ENCODE measurements at regions of chr3 and their contacts with region 1.

Region 1: DNA sequence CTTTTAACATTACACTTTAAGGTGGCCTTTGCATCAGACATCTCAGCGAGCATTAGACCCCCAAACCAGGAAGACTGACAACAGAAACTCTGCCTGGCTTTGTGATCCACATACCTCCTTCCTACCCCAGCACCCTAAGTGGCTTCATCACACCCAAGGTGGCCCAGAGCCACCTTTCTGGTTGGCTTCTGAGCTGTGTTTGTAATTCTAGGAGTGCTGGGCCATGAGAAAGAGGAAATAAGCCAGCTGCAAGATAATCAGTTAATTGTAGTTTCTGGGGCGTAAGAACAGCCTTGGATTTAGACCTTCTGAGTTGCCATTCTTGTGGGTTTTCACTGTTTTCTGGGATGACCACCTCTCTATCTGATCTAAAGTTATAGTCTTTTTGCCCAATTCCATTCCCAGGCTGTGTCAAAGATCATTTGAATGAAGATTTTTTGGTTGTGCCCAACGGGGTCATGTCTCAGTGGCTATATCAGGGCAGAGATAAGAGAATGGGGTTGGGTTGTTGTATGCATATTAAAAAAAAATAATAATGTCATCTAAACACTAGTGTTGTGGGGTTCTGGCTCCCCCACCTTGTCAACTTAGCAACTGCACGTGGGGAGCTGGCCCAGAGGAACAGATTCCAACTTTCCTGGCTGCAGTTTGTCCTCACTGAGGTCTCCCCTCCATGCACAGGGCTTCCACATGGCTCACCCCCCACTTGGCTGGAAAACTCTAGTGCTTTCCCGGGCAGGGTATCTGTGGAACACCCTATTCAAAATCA is 234.8 kb upstream of the WNT5A start:
- DNase-seq: no peak
- ATAC-seq: peak in 2 of 4 donors; percentile 30 to 36
- H3K4me3 ChIP-seq: no peak overlapping the region
- H3K27ac ChIP-seq: no peak overlapping the region
- H3K4me1 ChIP-seq: no peaks in the 10 kb centered on the region
- H3K27me3 ChIP-seq: peaks cover 0 to 37% (median 0%) of the 10 kb centered on the region in 9 donors
- CTCF ChIP-seq: peak; percentile 12 to 45 (median 39)
- POLR2A ChIP-seq: no peak

Region 2: GRCh38 chr3:54951405-54951804 is 770.5 kb before region 1 on chr3:
- intact Hi-C with region 1: loop called in 1 of 10 experiments (anchors 10 kb)
- DNase-seq: peak; percentile 70 to 87 (median 84)
- ATAC-seq: peak; percentile 93 to 100 (median 98)
- H3K4me3 ChIP-seq: no peak overlapping the region
- H3K27ac ChIP-seq: no peak overlapping the region
- H3K4me1 ChIP-seq: peaks cover 0 to 16% (median 2%) of the 10 kb centered on the region in 12 donors
- H3K27me3 ChIP-seq: no peaks in the 10 kb centered on the region
- CTCF ChIP-seq: peak; percentile 47 to 71 (median 60)
- POLR2A ChIP-seq: no peak

Region 3: DNA sequence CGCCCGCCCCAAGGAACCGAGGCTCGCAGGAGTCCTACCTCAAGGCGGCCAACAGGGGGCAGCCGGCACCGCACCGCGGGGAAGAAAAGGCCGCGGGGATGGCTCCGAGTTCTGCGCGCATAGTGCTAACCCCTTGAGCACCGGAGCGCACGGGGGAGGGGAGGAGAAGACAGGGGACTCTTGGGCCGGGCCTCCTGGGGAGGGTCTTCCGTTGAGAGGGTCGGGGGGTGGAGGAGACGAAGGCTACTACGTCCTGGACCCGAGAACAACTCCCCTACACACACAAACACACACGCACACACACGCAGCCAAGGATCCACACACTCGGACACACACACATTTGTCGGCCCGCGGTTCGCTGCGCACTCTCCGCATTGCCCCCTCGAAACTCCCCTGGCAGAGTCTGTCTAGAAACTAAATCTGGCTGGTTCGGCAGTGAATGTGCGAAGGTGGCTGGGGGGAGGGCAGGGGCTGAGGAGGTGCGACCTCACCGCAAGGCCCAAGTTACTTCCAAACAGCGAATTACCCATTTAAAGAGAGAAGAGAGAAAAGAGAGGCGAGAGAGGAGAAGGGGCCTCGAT is 236.6 kb before region 1 on chr3:
- intact Hi-C with region 1: loop called in 4 of 10 experiments (anchors 2 to 5 kb)
- DNase-seq: peak; percentile 69 to 87 (median 75)
- ATAC-seq: peak; percentile 64 to 83 (median 83)
- H3K4me3 ChIP-seq: peak overlapping the region; percentile 37 to 92 (median 66)
- H3K27ac ChIP-seq: peak overlapping the region in 10 of 12 donors; percentile 2 to 73 (median 61)
- H3K4me1 ChIP-seq: peaks cover 0 to 71% (median 13%) of the 10 kb centered on the region in 12 donors
- H3K27me3 ChIP-seq: peaks cover 4 to 90% (median 12%) of the 10 kb centered on the region in 9 donors
- CTCF ChIP-seq: peak; percentile 51 to 86 (median 72)
- POLR2A ChIP-seq: no peak

Region 4: DNA sequence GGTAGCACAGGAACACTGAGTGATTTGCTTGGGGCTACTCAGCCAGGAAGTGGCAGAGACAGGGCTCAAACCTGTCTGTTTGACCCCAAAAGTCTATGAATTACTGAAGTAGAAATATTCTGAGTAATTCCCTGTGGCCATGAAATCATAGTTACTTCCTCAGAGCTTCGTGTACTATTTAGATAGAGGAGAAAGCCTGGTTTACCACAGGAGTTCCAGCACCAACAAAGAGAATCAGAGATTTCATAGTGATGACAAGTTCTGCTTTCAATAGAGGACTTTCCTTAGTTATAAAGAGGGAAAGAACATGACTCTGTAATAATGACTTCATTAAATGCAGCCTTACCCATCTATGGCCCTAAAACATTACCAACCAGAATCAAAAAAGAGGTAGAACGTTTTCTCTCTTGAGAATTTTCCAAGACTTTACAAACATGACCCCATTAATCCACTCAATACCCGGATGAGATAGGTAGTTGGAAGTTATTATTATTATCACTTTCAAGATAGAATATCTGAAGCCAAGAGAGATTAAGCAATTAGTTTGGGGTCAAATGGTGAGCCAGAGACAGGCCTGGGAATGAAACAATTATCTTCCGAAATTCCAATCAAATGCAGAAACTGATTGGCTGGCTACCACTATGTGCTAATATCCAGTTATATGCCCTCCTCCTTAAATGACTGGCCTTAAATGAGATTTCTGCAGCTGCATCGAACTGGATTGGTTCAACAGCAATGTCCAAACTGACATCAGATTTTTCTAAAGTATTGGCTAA is 221.2 kb before region 1 on chr3:
- intact Hi-C with region 1: loop called in 2 of 10 experiments (anchors 1 to 10 kb)
- DNase-seq: no peak
- ATAC-seq: no peak
- H3K4me3 ChIP-seq: no peak overlapping the region
- H3K27ac ChIP-seq: no peak overlapping the region
- H3K4me1 ChIP-seq: no peaks in the 10 kb centered on the region
- H3K27me3 ChIP-seq: peaks cover 0 to 5% (median 0%) of the 10 kb centered on the region in 9 donors
- CTCF ChIP-seq: no peak
- POLR2A ChIP-seq: no peak

Region 5: GRCh38 chr3:55505776-55506175 is 216.1 kb before region 1 on chr3:
- intact Hi-C with region 1: loop called in 2 of 10 experiments (anchors 1 to 10 kb)
- DNase-seq: no peak
- ATAC-seq: no peak
- H3K4me3 ChIP-seq: no peak overlapping the region
- H3K27ac ChIP-seq: no peak overlapping the region
- H3K4me1 ChIP-seq: no peaks in the 10 kb centered on the region
- H3K27me3 ChIP-seq: peaks cover 0 to 19% (median 0%) of the 10 kb centered on the region in 9 donors
- CTCF ChIP-seq: no peak
- POLR2A ChIP-seq: no peak

Region 6: DNA sequence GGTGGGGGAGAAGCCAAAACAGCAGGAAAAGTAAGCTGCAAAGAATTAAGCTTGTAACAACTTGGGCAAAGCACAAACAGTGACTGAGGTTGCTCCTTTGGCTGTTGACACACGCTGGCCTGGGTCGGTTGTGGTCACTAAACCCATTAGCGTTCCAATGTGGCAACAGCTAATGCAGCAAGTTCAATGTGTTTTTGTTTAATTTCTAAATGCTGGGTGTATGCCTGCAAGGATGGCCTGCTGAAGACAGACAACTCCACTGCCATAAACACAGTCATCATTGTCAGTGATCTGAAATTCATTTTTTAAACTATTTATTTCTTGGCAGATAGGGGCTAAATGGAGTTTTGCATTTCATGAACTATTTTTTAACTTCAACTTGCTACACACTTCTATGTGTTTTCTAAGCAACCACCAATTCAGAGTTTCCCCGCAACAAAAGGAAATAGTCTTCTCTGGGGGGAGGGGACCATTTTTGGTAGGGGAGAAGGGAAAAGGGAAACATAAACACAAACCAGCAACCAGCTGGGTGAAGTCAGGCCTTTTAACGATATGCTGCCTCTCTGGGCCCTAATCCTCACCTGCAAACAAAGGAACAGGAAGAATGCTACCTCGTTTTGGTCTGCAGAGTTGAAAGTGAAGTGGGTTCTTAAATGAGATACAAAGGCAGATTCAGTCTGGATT is 200.0 kb before region 1 on chr3:
- intact Hi-C with region 1: loop called in 1 of 10 experiments (anchors 10 kb)
- DNase-seq: no peak
- ATAC-seq: no peak
- H3K4me3 ChIP-seq: no peak overlapping the region
- H3K27ac ChIP-seq: no peak overlapping the region
- H3K4me1 ChIP-seq: no peaks in the 10 kb centered on the region
- H3K27me3 ChIP-seq: peaks cover 0 to 8% (median 0%) of the 10 kb centered on the region in 9 donors
- CTCF ChIP-seq: no peak
- POLR2A ChIP-seq: no peak

Region 7: GRCh38 chr3:55571913-55572312 is 150.0 kb before region 1 on chr3:
- intact Hi-C with region 1: loop called in 1 of 10 experiments (anchors 10 kb)
- DNase-seq: peak; percentile 66 to 89 (median 77)
- ATAC-seq: peak; percentile 94 to 98 (median 97)
- H3K4me3 ChIP-seq: no peak overlapping the region
- H3K27ac ChIP-seq: peak overlapping the region in 7 of 12 donors; percentile 22 to 70 (median 56)
- H3K4me1 ChIP-seq: peaks cover 0 to 19% (median 2%) of the 10 kb centered on the region in 12 donors
- H3K27me3 ChIP-seq: no peaks in the 10 kb centered on the region
- CTCF ChIP-seq: peak in 11 of 12 donors; percentile 11 to 61 (median 45)
- POLR2A ChIP-seq: no peak

Region 8: GRCh38 chr3:55654123-55654760 is 67.7 kb before region 1 on chr3:
- intact Hi-C with region 1: no loop called
- DNase-seq: no peak
- ATAC-seq: no peak
- H3K4me3 ChIP-seq: no peak overlapping the region
- H3K27ac ChIP-seq: no peak overlapping the region
- H3K4me1 ChIP-seq: no peaks in the 10 kb centered on the region
- H3K27me3 ChIP-seq: no peaks in the 10 kb centered on the region
- CTCF ChIP-seq: no peak
- POLR2A ChIP-seq: no peak

Region 9: GRCh38 chr3:55765906-55766701 is 44.2 kb after region 1 on chr3:
- intact Hi-C with region 1: no loop called
- DNase-seq: no peak
- ATAC-seq: no peak
- H3K4me3 ChIP-seq: no peak overlapping the region
- H3K27ac ChIP-seq: no peak overlapping the region
- H3K4me1 ChIP-seq: no peaks in the 10 kb centered on the region
- H3K27me3 ChIP-seq: peaks cover 0 to 4% (median 0%) of the 10 kb centered on the region in 9 donors
- CTCF ChIP-seq: no peak
- POLR2A ChIP-seq: no peak

Measured in heart left ventricle (tissue), 16 donors.